Activated CD4-positive, alpha-beta T cell treated with anti-CD3 and anti-CD28 coated beads, Interleukin-2, amount 10 ng/mL, durations not matched to agents 24 days and 14 days (primary cell): ENCODE measurements at regions of chr1 and their contacts with region 1.

Region 1: DNA sequence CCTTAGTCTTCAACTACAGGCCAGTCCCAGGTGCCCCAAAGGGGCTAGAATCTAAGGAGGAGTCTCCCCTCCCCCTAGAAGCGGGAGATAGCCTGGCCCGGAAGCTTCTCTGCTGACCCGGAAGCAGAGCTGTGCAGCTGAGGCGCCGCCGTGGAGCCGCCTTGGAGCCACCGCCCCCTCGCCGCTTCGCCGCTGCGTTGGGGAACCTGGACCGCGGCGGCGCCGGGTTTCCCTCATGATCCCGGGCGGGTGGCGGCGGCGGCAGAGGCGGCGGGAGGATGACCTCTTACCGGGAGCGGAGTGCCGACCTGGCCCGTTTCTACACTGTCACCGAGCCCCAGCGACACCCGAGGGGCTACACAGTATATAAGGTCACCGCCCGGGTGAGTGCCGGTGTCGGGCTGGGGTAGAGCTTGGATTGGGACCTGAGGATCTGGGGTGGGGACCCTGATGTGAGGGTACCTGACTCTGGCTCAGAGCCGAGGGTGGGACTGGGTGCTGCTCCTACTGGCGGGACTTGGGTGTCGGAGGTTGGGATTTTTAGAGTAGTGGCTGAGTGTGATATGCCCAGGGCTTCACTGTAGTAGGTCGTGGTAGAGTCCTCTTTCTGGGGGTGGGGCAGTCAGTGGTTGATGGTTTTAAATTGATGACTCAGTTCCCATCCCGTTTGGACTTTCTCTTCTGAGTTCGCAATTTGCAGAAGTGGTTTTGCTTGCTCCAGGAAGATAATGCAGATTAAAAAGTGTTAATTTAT is at the start of gene RPS6KC1:
- DNase-seq: peak; percentile 94
- H3K4me3 Mint-ChIP-seq: peak within 1 kb of the TSS; percentile 99
- H3K27ac Mint-ChIP-seq: peak within 1 kb of the TSS; percentile 92
- H3K4me1 Mint-ChIP-seq: peaks cover 26% of the 10 kb centered on the region
- H3K27me3 Mint-ChIP-seq: peaks cover 11% of the 10 kb centered on the region
- total RNA-seq, gene RPS6KC1: 7.0 and 7.5 TPM in 2 replicates

Region 2: GRCh38 chr1:212566522-212567479 is 484.5 kb before region 1 on chr1:
- intact Hi-C with region 1: loop called (anchors 1 kb)
- DNase-seq: peak; percentile 86
- H3K4me3 Mint-ChIP-seq: peak overlapping the region; percentile 81
- H3K27ac Mint-ChIP-seq: peak overlapping the region; percentile 89
- H3K4me1 Mint-ChIP-seq: peaks cover 27% of the 10 kb centered on the region
- H3K27me3 Mint-ChIP-seq: peaks cover 35% of the 10 kb centered on the region

Region 3: GRCh38 chr1:212791676-212792395 is 259.5 kb before region 1 on chr1 and contains the starts of genes NSL1 and TATDN3:
- intact Hi-C with region 1: loop called (anchors 1 kb)
- DNase-seq: peak; percentile 99
- H3K4me3 Mint-ChIP-seq: peak within 1 kb of the TSS; percentile 93
- H3K27ac Mint-ChIP-seq: peak within 1 kb of the TSS; percentile 96
- H3K4me1 Mint-ChIP-seq: peaks cover 26% of the 10 kb centered on the region
- H3K27me3 Mint-ChIP-seq: no peaks in the 10 kb centered on the region
- total RNA-seq, gene NSL1: 37.3 and 40.0 TPM in 2 replicates
- total RNA-seq, gene TATDN3: 15.1 and 16.2 TPM in 2 replicates

Region 4: DNA sequence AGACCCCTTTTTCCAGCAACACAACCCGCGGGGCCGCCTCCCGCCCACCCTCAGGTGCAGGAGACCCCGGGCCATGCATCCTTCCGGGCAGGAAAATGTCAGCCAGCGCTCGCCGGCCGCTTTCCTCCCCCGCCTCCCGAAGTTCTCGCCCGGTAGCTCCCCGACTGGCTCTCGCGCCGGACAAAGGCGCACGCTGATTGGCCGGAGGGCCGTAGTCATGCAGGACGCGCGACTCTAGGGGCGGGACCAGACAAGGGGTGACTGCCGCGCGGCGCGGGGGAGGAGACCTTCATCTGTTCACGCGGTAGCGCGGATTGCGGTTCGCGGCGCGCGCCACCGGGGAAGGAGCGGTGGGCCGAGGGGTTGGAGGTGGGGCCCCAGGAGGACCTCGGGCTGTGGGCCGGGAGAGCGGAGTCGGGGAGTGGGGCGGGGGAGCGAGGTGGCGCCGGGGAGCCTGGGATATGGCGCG is 193.3 kb before region 1 on chr1 and contains the start of gene FLVCR1:
- intact Hi-C with region 1: loop called (anchors 2 kb)
- DNase-seq: peak; percentile 99
- H3K4me3 Mint-ChIP-seq: no peak within 1 kb of the TSS
- H3K27ac Mint-ChIP-seq: peak within 1 kb of the TSS; percentile 97
- H3K4me1 Mint-ChIP-seq: peaks cover 19% of the 10 kb centered on the region
- H3K27me3 Mint-ChIP-seq: no peaks in the 10 kb centered on the region
- total RNA-seq, gene FLVCR1: 17.9 and 21.8 TPM in 2 replicates

Region 5: DNA sequence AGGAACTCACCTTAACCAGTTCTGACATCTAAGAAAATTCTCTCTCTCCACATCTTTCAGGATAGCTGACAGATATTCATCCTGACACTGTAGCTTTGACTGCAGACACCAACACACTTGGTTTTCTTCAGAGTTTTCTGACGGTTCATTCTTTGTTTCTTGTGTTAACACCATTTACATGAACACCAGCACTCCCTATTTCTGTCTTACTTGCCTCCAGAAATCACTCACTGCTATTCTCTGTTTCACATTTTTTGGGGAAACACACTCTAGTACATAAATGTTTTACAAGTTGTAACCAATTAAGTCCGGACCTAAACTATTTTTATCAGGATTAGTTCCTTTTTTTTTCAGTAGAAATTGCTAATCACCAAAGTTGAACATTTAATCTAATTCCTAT is 177.8 kb before region 1 on chr1:
- intact Hi-C with region 1: no loop called
- DNase-seq: no peak
- H3K4me3 Mint-ChIP-seq: no peak overlapping the region
- H3K27ac Mint-ChIP-seq: no peak overlapping the region
- H3K4me1 Mint-ChIP-seq: no peaks in the 10 kb centered on the region
- H3K27me3 Mint-ChIP-seq: no peaks in the 10 kb centered on the region

Region 6: GRCh38 chr1:213015099-213016050 is 35.9 kb before region 1 on chr1 and contains the start of gene ANGEL2:
- intact Hi-C with region 1: loop called (anchors 1 kb)
- DNase-seq: peak; percentile 99
- H3K4me3 Mint-ChIP-seq: peak within 1 kb of the TSS; percentile 99
- H3K27ac Mint-ChIP-seq: peak within 1 kb of the TSS; percentile 100
- H3K4me1 Mint-ChIP-seq: peaks cover 26% of the 10 kb centered on the region
- H3K27me3 Mint-ChIP-seq: peaks cover 8% of the 10 kb centered on the region
- total RNA-seq, gene ANGEL2: 43.7 and 47.6 TPM in 2 replicates

Region 7: GRCh38 chr1:213070406-213070805 is 19.1 kb after region 1 on chr1:
- intact Hi-C with region 1: loop called (anchors 2 kb)
- DNase-seq: peak; percentile 79
- H3K4me3 Mint-ChIP-seq: peak overlapping the region; percentile 41
- H3K27ac Mint-ChIP-seq: peak overlapping the region; percentile 34
- H3K4me1 Mint-ChIP-seq: peaks cover 28% of the 10 kb centered on the region
- H3K27me3 Mint-ChIP-seq: no peaks in the 10 kb centered on the region

Region 8: GRCh38 chr1:213094446-213094845 is 43.1 kb after region 1 on chr1:
- intact Hi-C with region 1: loop called (anchors 5 kb)
- DNase-seq: no peak
- H3K4me3 Mint-ChIP-seq: no peak overlapping the region
- H3K27ac Mint-ChIP-seq: no peak overlapping the region
- H3K4me1 Mint-ChIP-seq: peaks cover 20% of the 10 kb centered on the region
- H3K27me3 Mint-ChIP-seq: no peaks in the 10 kb centered on the region